MCF 10A (cell line): ENCODE measurements at regions of chr5 and their contacts with region 1.

Region 1: GRCh38 chr5:132190161-132190817 is 37.4 kb downstream of the P4HA2 start:
- DNase-seq: peak; percentile 85
- H3K4me3 Mint-ChIP-seq: no peak overlapping the region
- H3K27ac Mint-ChIP-seq: no peak overlapping the region
- H3K4me1 Mint-ChIP-seq: peaks cover 9% of the 10 kb centered on the region
- H3K27me3 Mint-ChIP-seq: no peaks in the 10 kb centered on the region
- CTCF ChIP-seq: peak; percentile 55

Region 2: GRCh38 chr5:132019857-132020555 is 170.3 kb before region 1 on chr5:
- CTCF ChIA-PET with region 1: no interaction called
- POLR2A ChIA-PET with region 1: no interaction called
- intact Hi-C with region 1: no loop called
- DNase-seq: no peak
- H3K4me3 Mint-ChIP-seq: no peak overlapping the region
- H3K27ac Mint-ChIP-seq: no peak overlapping the region
- H3K4me1 Mint-ChIP-seq: no peaks in the 10 kb centered on the region
- H3K27me3 Mint-ChIP-seq: peaks cover 43% of the 10 kb centered on the region
- CTCF ChIP-seq: no peak

Region 3: DNA sequence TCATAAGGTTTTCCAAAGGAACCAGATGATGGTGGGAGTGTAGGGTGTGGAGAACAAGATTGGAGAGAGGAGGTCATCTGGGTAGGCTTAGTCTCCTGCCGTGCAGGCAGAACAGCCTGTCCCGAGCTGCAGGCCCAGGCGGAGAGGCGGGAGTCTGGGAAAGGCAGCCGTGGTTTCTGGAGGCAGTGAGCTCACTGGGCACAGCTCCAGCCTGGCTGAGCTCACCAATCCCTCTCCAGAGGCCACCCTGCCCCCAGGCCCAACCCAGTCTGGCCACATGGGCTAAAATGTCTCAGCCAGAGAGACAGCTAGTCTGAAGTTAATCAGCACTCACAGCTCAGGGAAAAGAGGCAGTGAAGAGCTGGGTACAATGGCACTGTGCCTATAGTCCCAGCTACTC is 25.0 kb after region 1 on chr5:
- CTCF ChIA-PET with region 1: interaction called, 10 read pairs
- POLR2A ChIA-PET with region 1: interaction called, 10 read pairs
- intact Hi-C with region 1: no loop called
- DNase-seq: peak; percentile 99
- H3K4me3 Mint-ChIP-seq: peak overlapping the region; percentile 32
- H3K27ac Mint-ChIP-seq: peak overlapping the region; percentile 80
- H3K4me1 Mint-ChIP-seq: peaks cover 15% of the 10 kb centered on the region
- H3K27me3 Mint-ChIP-seq: no peaks in the 10 kb centered on the region
- CTCF ChIP-seq: no peak

Region 4: DNA sequence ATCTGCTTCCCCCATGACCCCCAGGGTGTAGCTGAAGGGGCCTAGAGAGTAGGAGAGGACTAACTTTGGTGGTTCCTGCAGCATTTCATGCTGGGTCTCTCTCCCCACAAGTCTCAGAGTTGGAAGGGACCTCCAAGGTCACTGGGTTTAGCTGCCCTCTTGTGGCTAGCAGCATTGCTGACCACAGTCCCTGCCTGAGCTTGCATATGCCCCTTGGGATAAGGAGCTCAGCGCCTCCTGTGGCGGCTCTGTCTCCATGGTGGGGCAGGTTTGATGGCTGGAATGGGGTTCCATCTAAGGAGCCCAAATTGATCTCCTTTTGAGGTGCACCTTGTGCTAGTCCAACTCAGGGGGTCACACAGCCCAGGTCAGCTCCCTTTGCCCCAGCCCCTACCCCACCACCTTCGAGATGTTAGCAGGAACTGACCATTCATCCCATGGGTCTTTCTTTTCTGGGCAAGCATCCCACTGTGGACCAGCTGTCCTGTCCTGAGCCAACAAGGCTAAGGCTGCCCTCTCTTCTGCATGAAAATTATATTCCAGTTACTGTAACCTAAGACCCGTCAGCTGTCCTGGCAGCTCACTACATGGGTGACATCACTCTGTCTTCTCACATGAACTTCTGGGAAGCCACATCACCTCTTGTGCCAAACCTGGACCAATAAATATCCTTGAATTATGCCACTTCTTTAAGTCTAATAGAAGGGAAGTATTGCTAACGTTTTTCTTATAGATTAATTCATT is 1057.8 kb after region 1 on chr5:
- CTCF ChIA-PET with region 1: no interaction called
- POLR2A ChIA-PET with region 1: no interaction called
- intact Hi-C with region 1: no loop called
- DNase-seq: peak; percentile 75
- H3K4me3 Mint-ChIP-seq: no peak overlapping the region
- H3K27ac Mint-ChIP-seq: no peak overlapping the region
- H3K4me1 Mint-ChIP-seq: peaks cover 23% of the 10 kb centered on the region
- H3K27me3 Mint-ChIP-seq: no peaks in the 10 kb centered on the region
- CTCF ChIP-seq: peak; percentile 57